Activated T-helper 1 cell treated with anti-CD3 and anti-CD28 coated beads, Interleukin-12 subunit alpha, Interleukin-12 subunit beta, Interleukin-2, Interleukin-4 antibody, amounts not matched to agents 30 ng/mL and 10 ng/mL and 1 ng/mL, durations not matched to agents 14 hours and 24 hours and 36 hours (primary cell): ENCODE measurements at regions of chr14 and their contacts with region 1.

Region 1: DNA sequence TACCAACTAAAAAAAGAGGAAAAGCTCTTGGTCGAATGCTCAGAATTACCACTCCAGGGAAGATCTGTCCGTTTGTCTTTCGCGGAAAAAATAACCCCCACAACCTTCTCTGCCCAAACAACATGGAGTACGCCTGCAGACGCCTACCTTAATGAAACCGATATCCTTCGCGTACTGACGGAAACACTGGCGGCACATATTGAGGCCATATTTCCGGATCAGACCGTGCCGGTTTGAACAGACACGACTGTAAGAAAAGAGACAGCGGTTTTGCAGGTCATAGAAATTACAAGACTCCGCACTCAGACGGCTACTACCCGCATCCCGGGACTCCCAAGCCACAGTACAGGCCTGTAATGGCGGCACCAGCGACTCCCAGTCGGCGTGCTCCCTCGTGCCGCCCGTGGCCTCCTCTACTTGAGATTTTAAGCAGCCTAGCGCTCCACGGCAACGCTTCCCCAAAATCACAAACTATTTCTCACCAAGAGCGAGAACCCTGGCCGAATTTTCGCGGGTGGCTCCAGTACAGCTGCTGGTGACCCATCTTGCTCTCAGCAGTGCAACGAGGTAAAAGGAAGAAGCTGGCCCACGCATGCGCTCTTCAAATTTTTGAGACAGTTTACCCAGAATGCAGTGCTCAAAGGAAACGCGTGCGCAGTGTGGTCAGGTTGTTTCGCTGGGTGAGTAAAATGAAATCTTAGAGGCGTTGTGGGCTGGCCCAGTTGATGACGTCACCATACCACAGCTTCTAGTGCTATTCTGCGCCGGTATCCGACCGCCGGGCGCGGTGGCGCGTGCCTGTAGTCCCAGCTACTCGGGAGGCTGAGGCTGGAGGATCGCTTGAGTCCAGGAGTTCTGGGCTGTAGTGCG is at the start of gene RPS29:
- DNase-seq: peak; percentile 97
- H3K4me3 Mint-ChIP-seq: peak within 1 kb of the TSS; percentile 93
- H3K27ac Mint-ChIP-seq: peak within 1 kb of the TSS; percentile 99
- H3K4me1 Mint-ChIP-seq: peaks cover 46% of the 10 kb centered on the region
- H3K27me3 Mint-ChIP-seq: peaks cover 3% of the 10 kb centered on the region
- total RNA-seq, gene RPS29: 1,860 and 1,913 TPM in 2 replicates

Region 2: DNA sequence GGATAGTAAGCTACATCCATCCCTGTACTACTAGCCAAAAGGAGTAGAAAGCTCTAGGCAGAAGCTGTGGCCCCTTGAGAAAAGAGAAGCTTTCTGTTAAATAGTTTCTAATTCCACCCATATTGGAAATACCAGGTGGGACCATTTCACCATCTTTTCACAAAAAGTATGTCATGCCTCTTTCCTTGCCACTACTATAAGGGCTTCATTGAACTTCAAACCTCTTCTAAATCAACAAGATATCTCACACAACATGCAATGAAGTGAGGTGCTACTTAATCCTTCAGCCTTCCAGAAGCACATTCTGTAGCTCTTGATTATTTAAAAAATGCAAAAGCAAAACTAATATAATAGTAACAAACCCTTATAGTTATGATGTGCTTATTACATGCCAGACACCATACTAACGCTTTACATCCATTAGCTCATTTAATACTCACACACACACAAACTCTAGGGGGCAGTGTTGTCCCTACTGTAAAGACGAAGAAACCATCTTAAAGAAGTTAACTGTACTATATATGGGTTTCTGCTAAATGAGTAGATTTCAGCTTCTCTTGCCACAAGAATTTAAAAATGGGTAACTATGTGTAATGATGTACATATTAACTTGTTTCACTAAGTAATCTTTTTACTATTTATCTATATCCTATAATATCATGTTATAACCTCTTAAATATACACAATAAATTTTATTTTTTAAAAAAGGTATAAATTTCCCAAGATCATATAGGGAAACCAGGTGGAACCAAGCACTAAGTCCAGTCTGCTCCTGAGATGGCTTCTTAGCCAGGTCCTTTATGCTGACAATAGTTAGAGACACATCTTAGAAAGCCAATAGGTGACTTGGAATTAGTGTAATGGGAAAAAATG is 124.3 kb before region 1 on chr14:
- intact Hi-C with region 1: loop called (anchors 2 kb)
- DNase-seq: peak; percentile 40
- H3K4me3 Mint-ChIP-seq: no peak overlapping the region
- H3K27ac Mint-ChIP-seq: no peak overlapping the region
- H3K4me1 Mint-ChIP-seq: no peaks in the 10 kb centered on the region
- H3K27me3 Mint-ChIP-seq: peaks cover 26% of the 10 kb centered on the region

Region 3: DNA sequence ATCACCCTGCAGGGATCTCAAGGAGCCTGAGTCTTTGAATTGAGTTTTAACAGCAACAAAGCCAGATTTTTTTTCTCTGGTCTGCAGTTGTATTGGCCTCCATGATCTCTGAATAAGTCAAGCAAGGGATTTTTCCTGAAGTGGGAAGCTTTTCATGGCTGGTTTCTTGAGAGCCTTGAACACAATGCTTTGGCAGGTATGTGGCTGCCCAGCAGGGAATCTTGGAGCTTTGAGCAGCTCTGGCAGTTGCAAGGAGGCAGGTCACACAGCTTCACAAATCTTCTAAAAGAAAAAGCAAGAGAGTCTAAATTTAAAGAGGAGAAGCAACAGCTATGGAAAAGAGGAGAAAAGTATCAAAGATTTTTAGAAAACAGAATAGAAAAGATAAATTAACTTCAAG is 59.9 kb before region 1 on chr14:
- intact Hi-C with region 1: no loop called
- DNase-seq: no peak
- H3K4me3 Mint-ChIP-seq: no peak overlapping the region
- H3K27ac Mint-ChIP-seq: no peak overlapping the region
- H3K4me1 Mint-ChIP-seq: no peaks in the 10 kb centered on the region
- H3K27me3 Mint-ChIP-seq: peaks cover 4% of the 10 kb centered on the region

Region 4: DNA sequence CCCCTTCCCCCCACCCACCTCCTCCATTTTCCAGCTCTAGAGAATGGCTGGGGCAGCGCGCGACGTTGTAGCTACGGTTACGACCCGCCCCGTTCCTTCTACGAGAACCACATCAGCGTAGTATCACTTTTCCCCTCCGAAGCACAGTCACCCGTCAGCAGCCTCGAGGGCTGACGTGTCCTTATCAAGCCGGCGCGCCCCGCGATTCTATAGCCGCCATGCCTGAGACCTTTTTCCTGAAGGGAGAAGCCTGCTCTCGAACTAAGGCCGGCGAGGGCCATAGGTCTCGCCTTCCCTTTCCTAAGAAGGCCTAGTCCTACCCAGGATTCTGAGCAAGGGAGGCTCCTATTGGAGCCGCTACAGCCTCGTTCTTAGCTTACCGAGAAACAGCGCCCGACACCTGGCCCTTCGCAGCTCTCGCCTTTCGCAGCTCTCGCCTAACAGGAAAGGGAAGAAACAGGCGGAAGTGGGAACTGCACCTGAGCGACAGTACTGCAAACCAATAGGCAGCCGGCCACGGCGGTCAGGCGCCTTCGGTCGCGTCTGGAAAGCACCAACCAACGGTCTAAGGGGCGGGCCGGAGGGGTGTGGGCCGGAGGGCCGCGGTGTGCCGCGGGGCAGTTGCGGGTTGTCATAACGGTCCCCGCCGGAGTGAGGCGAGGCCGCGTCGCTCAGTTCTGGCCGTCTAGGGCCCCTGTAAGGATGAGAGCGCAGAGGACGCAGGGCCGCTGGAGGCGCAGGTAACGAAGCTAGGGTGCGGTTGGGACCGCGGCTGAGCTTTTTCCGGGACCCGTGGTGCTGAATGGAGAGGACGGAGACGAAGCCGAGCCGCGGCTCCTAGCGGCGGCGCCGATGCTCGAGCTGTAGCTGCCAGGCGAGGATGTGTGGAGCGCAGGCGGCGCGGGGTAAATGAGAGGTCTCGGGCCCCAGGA is 34.4 kb after region 1 on chr14 and contains the starts of genes MGAT2 and RPL36AL:
- intact Hi-C with region 1: loop called (anchors 1 kb)
- DNase-seq: peak; percentile 96
- H3K4me3 Mint-ChIP-seq: peak within 1 kb of the TSS; percentile 98
- H3K27ac Mint-ChIP-seq: peak within 1 kb of the TSS; percentile 98
- H3K4me1 Mint-ChIP-seq: peaks cover 53% of the 10 kb centered on the region
- H3K27me3 Mint-ChIP-seq: peaks cover 2% of the 10 kb centered on the region
- total RNA-seq, gene MGAT2: 57.5 and 58.3 TPM in 2 replicates
- total RNA-seq, gene RPL36AL: 224 and 237 TPM in 2 replicates

Region 5: GRCh38 chr14:49692811-49693734 is 107.0 kb after region 1 on chr14 and contains the start of gene KLHDC1:
- intact Hi-C with region 1: loop called (anchors 1 kb)
- DNase-seq: peak; percentile 74
- H3K4me3 Mint-ChIP-seq: peak within 1 kb of the TSS; percentile 87
- H3K27ac Mint-ChIP-seq: peak within 1 kb of the TSS; percentile 94
- H3K4me1 Mint-ChIP-seq: peaks cover 19% of the 10 kb centered on the region
- H3K27me3 Mint-ChIP-seq: peaks cover 1% of the 10 kb centered on the region
- total RNA-seq, gene KLHDC1: 0.93 and 1.9 TPM in 2 replicates

Region 6: DNA sequence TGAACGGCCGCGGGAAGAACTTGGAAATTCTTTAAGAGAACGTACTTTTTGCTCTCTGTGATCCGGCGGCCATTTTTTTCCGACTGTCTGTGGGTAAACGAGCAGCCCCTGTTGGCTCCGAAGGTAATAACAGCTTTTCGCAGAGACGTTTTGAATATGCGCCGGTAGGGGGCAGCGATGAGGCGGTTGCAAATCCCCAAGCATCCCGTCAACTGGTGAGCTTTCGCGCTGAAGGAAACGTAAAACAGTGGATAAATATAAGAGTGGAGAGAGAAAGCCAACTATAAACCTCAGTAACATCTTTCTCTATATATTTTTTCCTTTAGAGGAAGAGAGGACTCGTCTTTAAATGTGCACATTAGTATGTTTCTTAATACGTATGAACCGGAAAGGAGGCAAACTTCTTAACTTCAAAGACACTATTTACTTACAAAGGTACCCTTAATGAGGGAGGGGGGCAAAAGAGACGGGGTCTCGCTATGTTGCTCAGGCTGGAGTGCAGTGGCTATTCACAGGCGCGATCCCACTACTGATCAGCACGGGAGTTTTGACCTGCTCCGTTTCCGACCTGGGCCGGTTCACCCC is 276.1 kb after region 1 on chr14:
- intact Hi-C with region 1: loop called (anchors 1 kb)
- DNase-seq: peak; percentile 81
- H3K4me3 Mint-ChIP-seq: no peak overlapping the region
- H3K27ac Mint-ChIP-seq: no peak overlapping the region
- H3K4me1 Mint-ChIP-seq: peaks cover 10% of the 10 kb centered on the region
- H3K27me3 Mint-ChIP-seq: peaks cover 6% of the 10 kb centered on the region